ENCODE measurements at regions of chr12 and their contacts with region 1.

Region 1: DNA sequence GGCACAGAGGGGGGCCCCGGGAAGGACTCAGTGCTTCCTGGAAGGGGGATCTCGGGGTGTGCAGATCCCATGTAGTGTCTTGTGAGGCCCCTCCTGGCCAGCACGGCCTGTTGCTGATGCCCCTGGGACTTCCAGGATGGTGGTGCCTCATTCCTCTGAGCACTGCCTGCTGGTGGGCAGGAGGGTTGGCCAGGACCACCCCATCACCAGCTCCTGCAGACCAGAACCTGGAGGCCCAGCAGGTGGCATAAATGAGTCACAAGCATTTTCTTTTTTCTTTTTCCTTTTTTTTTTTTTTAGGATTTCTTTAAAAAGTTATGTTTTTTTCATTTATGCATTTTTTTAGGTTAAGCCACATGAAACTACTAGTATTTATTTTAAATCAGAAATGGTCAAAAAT is 8.0 kb downstream of the MMP17 start:
- DNase-seq: no peak
- ATAC-seq: peak; percentile 16; the same call in 1 of the 3 replicates
- H3K4me3 ChIP-seq: no peak overlapping the region
- H3K27ac ChIP-seq: no peak overlapping the region
- H3K4me1 ChIP-seq: peaks cover 0 to 61% of the 10 kb centered on the region in 2 experiments; a peak in 3 of 5 replicates
- H3K27me3 ChIP-seq: no peaks in the 10 kb centered on the region
- CTCF ChIP-seq: peak; percentile 50 to 62 (median 54); a peak in 5 of 6 replicates
- EP300 ChIP-seq: no peak
- POLR2A ChIP-seq: no peak
- RAD21 ChIP-seq: peak in 1 of 2 experiments; percentile 45; a peak in 2 of 4 replicates

Region 2: DNA sequence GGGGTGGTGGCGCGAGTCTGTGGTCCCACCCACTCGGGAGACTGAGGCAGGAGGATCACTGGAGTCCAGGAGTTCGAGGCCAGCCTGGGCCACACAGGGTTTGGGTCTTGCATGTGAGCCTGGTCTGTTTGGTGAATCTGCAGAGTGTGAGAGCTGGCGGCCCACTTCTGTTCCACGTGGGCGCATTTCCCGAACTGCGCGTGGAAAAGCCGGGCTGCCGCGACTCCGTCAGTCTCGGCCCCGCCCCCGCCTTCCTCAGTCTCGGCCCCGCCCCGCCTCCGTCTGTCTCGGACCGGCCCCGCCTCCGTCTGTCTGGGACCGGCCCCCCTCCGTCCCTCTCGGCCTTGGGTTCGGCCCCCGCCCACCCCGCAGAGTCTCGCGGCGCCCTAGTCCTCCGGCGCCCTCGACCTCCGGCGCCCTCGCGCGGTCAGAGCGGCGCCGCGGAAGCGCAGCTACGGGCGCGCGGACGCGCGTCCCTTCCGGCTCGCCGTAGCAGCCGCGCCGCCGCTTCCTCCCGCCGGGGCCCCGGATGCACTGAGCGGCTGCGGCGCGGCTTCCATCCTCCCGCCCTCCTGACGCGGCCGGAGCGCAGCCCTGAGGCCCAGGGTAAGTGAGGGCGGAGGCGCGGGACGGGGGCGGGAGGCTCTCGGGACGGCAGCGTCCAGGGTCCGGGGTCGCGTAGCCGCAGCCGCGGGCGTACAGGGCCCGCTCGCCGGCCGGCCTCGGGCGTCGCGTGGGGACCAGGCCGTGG is 113.4 kb after region 1 on chr12 and contains the start of gene EP400:
- CTCF ChIA-PET with region 1: interaction called, 4 read pairs
- POLR2A ChIA-PET with region 1: no interaction called
- in situ Hi-C with region 1: no loop called
- intact Hi-C with region 1: loop called (anchors 2 kb)
- DNase-seq: peak; percentile 96 to 97 (median 97)
- ATAC-seq: peak; percentile 95
- H3K4me3 ChIP-seq: peak within 1 kb of the TSS; percentile 97
- H3K27ac ChIP-seq: peak within 1 kb of the TSS; percentile 90
- H3K4me1 ChIP-seq: peaks cover 15 to 44% of the 10 kb centered on the region in 2 experiments
- H3K27me3 ChIP-seq: no peaks in the 10 kb centered on the region
- CTCF ChIP-seq: peak; percentile 40 to 84 (median 84); a peak in 5 of 6 replicates
- EP300 ChIP-seq: no peak
- POLR2A ChIP-seq: peak; percentile 43; the same call in 1 of the 2 replicates
- RAD21 ChIP-seq: peak; percentile 70 to 77
- polyA plus RNA-seq, gene EP400: 4.5 to 6.7 TPM

Measured in K562 (cell line).